ENCODE measurements at regions of chr11 and their contacts with region 1.

Region 1: GRCh38 chr11:12673924-12674570 is at the start of gene TEAD1:
- DNase-seq: peak; percentile 94 to 99 (median 98)
- ATAC-seq: peak; percentile 95
- H3K4me3 ChIP-seq: peak within 1 kb of the TSS; percentile 74
- H3K27ac ChIP-seq: peak within 1 kb of the TSS; percentile 86
- H3K4me1 ChIP-seq: peaks cover 5 to 12% of the 10 kb centered on the region in 2 experiments; a peak in 3 of 5 replicates
- H3K27me3 ChIP-seq: no peaks in the 10 kb centered on the region
- CTCF ChIP-seq: no peak; a peak in 1 of 6 replicates
- EP300 ChIP-seq: no peak; the same call in 1 of the 2 replicates
- POLR2A ChIP-seq: peak; percentile 79
- RAD21 ChIP-seq: no peak; a peak in 1 of 4 replicates
- polyA plus RNA-seq, gene TEAD1: 1.7 to 2.1 TPM

Region 2: GRCh38 chr11:12353534-12353933 is 320.5 kb before region 1 on chr11:
- CTCF ChIA-PET with region 1: no interaction called
- POLR2A ChIA-PET with region 1: no interaction called
- in situ Hi-C with region 1: no loop called
- intact Hi-C with region 1: no loop called
- DNase-seq: no peak
- ATAC-seq: no peak
- H3K4me3 ChIP-seq: no peak overlapping the region
- H3K27ac ChIP-seq: no peak overlapping the region
- H3K4me1 ChIP-seq: no peaks in the 10 kb centered on the region
- H3K27me3 ChIP-seq: peaks cover 2 to 11% of the 10 kb centered on the region in 2 experiments; a peak in 3 of 5 replicates
- CTCF ChIP-seq: no peak
- EP300 ChIP-seq: no peak
- POLR2A ChIP-seq: no peak
- RAD21 ChIP-seq: no peak

Region 3: GRCh38 chr11:12599408-12600143 is 74.5 kb before region 1 on chr11:
- CTCF ChIA-PET with region 1: no interaction called
- POLR2A ChIA-PET with region 1: no interaction called
- in situ Hi-C with region 1: no loop called
- intact Hi-C with region 1: loop called (anchors 5 kb)
- DNase-seq: peak; percentile 62 to 80 (median 66)
- ATAC-seq: peak; percentile 93
- H3K4me3 ChIP-seq: no peak overlapping the region
- H3K27ac ChIP-seq: no peak overlapping the region; the same call in 2 of the 3 replicates
- H3K4me1 ChIP-seq: peaks cover 4 to 27% of the 10 kb centered on the region in 2 experiments
- H3K27me3 ChIP-seq: no peaks in the 10 kb centered on the region
- CTCF ChIP-seq: peak; percentile 81 to 93 (median 85)
- EP300 ChIP-seq: no peak
- POLR2A ChIP-seq: no peak
- RAD21 ChIP-seq: peak; percentile 67 to 87

Region 4: DNA sequence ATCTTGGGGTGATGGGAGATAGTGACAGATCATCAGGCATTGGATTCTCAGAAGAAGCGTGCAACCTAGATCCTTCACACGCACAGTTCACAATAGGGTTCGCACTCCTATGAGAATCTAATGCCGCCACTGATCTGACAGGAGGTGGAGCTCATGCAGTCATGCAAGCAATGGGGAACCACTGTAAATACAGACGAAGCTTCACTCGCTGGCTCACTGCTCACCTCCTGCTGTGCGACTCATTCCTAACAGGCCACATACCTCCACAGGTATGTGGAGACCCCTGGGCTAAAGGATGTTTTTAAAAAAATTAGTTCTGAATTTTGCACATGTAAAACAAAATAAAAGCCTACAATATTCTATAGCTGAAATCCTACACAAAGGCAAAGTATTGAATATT is 20.3 kb before region 1 on chr11:
- CTCF ChIA-PET with region 1: no interaction called
- POLR2A ChIA-PET with region 1: no interaction called
- in situ Hi-C with region 1: no loop called
- intact Hi-C with region 1: no loop called
- DNase-seq: peak in 1 of 4 experiments; percentile 15
- ATAC-seq: peak; percentile 41; the same call in 1 of the 3 replicates
- H3K4me3 ChIP-seq: no peak overlapping the region
- H3K27ac ChIP-seq: no peak overlapping the region
- H3K4me1 ChIP-seq: no peaks in the 10 kb centered on the region
- H3K27me3 ChIP-seq: no peaks in the 10 kb centered on the region
- CTCF ChIP-seq: no peak
- EP300 ChIP-seq: no peak
- POLR2A ChIP-seq: no peak
- RAD21 ChIP-seq: peak in 1 of 2 experiments; percentile 26; a peak in 2 of 4 replicates

Region 5: GRCh38 chr11:12693479-12694181 is 19.6 kb after region 1 on chr11:
- CTCF ChIA-PET with region 1: no interaction called
- POLR2A ChIA-PET with region 1: interaction called, 14 read pairs
- in situ Hi-C with region 1: no loop called
- intact Hi-C with region 1: no loop called
- DNase-seq: peak in 1 of 4 experiments; percentile 26
- ATAC-seq: peak; percentile 25; the same call in 2 of the 3 replicates
- H3K4me3 ChIP-seq: no peak overlapping the region
- H3K27ac ChIP-seq: no peak overlapping the region
- H3K4me1 ChIP-seq: peaks cover 6 to 41% of the 10 kb centered on the region in 2 experiments
- H3K27me3 ChIP-seq: no peaks in the 10 kb centered on the region
- CTCF ChIP-seq: no peak
- EP300 ChIP-seq: no peak
- POLR2A ChIP-seq: no peak
- RAD21 ChIP-seq: no peak

Region 6: DNA sequence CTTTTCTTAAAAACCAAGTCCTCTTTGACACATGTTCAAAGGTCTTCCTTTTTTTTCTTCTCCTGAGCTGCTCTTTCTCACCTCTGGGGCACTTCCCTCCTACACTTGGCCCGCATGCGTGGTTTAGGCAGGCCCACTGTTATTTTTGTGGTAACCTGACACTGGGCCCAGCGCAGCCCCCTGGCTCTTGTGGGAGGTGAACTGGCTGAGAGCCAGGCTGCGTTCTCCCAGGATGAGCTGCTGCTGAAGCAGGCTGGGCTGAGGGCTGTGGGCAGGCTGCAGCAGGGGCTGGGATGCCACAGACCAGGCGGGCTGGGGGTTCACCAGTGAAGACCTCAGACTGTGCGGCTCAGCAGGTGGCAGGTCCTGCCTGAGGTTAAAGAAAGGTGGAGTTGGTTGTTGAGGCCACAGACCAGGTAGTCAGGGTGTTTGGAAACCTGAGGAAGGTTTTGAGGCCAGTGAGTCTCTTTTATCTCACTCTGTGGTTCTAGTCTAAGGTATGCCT is 72.6 kb after region 1 on chr11:
- CTCF ChIA-PET with region 1: no interaction called
- POLR2A ChIA-PET with region 1: no interaction called
- in situ Hi-C with region 1: no loop called
- intact Hi-C with region 1: loop called (anchors 5 kb)
- DNase-seq: peak; percentile 83 to 96 (median 89)
- ATAC-seq: peak; percentile 100
- H3K4me3 ChIP-seq: no peak overlapping the region
- H3K27ac ChIP-seq: 0 out of 3 replicates have a peak overlapping the region, but pooled peaks have one; percentile 2
- H3K4me1 ChIP-seq: peaks cover 15 to 19% of the 10 kb centered on the region in 2 experiments
- H3K27me3 ChIP-seq: no peaks in the 10 kb centered on the region
- CTCF ChIP-seq: peak in 2 of 3 experiments; percentile 5 to 13; a peak in 1 of 6 replicates
- EP300 ChIP-seq: peak; percentile 9; the same call in 1 of the 2 replicates
- POLR2A ChIP-seq: no peak
- RAD21 ChIP-seq: peak in 1 of 2 experiments; percentile 27; a peak in 2 of 4 replicates

Region 7: GRCh38 chr11:12813371-12814225 is 139.6 kb after region 1 on chr11:
- CTCF ChIA-PET with region 1: no interaction called
- POLR2A ChIA-PET with region 1: no interaction called
- in situ Hi-C with region 1: no loop called
- intact Hi-C with region 1: loop called (anchors 5 kb)
- DNase-seq: peak; percentile 16 to 54 (median 34)
- ATAC-seq: peak; percentile 15
- H3K4me3 ChIP-seq: no peak overlapping the region
- H3K27ac ChIP-seq: 0 out of 3 replicates have a peak overlapping the region, but pooled peaks have one; percentile 0
- H3K4me1 ChIP-seq: peaks cover 31 to 58% of the 10 kb centered on the region in 2 experiments
- H3K27me3 ChIP-seq: no peaks in the 10 kb centered on the region
- CTCF ChIP-seq: no peak
- EP300 ChIP-seq: no peak
- POLR2A ChIP-seq: no peak
- RAD21 ChIP-seq: 0 out of 4 replicates have a peak, but pooled peaks of 1 of the 2 experiments have one; percentile 1

Region 8: GRCh38 chr11:12862696-12863469 is 188.8 kb after region 1 on chr11:
- CTCF ChIA-PET with region 1: no interaction called
- POLR2A ChIA-PET with region 1: no interaction called
- in situ Hi-C with region 1: no loop called
- intact Hi-C with region 1: no loop called
- DNase-seq: peak; percentile 31 to 41 (median 36)
- ATAC-seq: no peak
- H3K4me3 ChIP-seq: no peak overlapping the region
- H3K27ac ChIP-seq: no peak overlapping the region
- H3K4me1 ChIP-seq: peaks cover 26 to 46% of the 10 kb centered on the region in 2 experiments
- H3K27me3 ChIP-seq: no peaks in the 10 kb centered on the region
- CTCF ChIP-seq: no peak
- EP300 ChIP-seq: no peak
- POLR2A ChIP-seq: no peak
- RAD21 ChIP-seq: no peak

Region 9: GRCh38 chr11:12914400-12914912 is 240.4 kb after region 1 on chr11:
- CTCF ChIA-PET with region 1: no interaction called
- POLR2A ChIA-PET with region 1: no interaction called
- in situ Hi-C with region 1: no loop called
- intact Hi-C with region 1: no loop called
- DNase-seq: peak; percentile 34 to 65 (median 46)
- ATAC-seq: peak; percentile 99
- H3K4me3 ChIP-seq: no peak overlapping the region
- H3K27ac ChIP-seq: no peak overlapping the region
- H3K4me1 ChIP-seq: 0 out of 5 replicates have a peak, but pooled peaks cover 0 to 4% of the 10 kb centered on the region in 2 experiments
- H3K27me3 ChIP-seq: no peaks in the 10 kb centered on the region
- CTCF ChIP-seq: peak; percentile 61 to 71 (median 67)
- EP300 ChIP-seq: no peak
- POLR2A ChIP-seq: no peak
- RAD21 ChIP-seq: peak in 1 of 2 experiments; percentile 47; a peak in 2 of 4 replicates

Measured in K562 (cell line).